A549 (cell line): ENCODE measurements at regions of chrX and their contacts with region 1.

Region 1: GRCh38 chrX:131677655-131678628 is 134.1 kb downstream of the OR13H1 start:
- DNase-seq: peak; percentile 38 to 71
- ATAC-seq: peak; percentile 69 to 88; a peak in 3 of 6 replicates
- H3K4me3 ChIP-seq: no peak overlapping the region
- H3K27ac ChIP-seq: no peak overlapping the region
- H3K4me1 ChIP-seq: no peaks in the 10 kb centered on the region
- CTCF ChIP-seq: peak; percentile 61
- EP300 ChIP-seq: no peak
- POLR2A ChIP-seq: no peak
- RAD21 ChIP-seq: peak; percentile 65 to 71

Region 2: GRCh38 chrX:130975947-130976346 is 702.0 kb before region 1 on chrX:
- CTCF ChIA-PET with region 1: interaction called, 22 read pairs
- POLR2A ChIA-PET with region 1: no interaction called
- DNase-seq: peak; percentile 25 to 57
- ATAC-seq: peak; percentile 83 to 93
- H3K4me3 ChIP-seq: no peak overlapping the region
- H3K27ac ChIP-seq: no peak overlapping the region
- H3K4me1 ChIP-seq: no peaks in the 10 kb centered on the region
- CTCF ChIP-seq: peak; percentile 76
- EP300 ChIP-seq: no peak
- POLR2A ChIP-seq: no peak
- RAD21 ChIP-seq: peak; percentile 75 to 78

Region 3: GRCh38 chrX:130994671-130995070 is 683.3 kb before region 1 on chrX:
- CTCF ChIA-PET with region 1: interaction called, 17 read pairs
- POLR2A ChIA-PET with region 1: no interaction called
- DNase-seq: peak; percentile 16 to 21
- ATAC-seq: peak in 1 of 2 experiments; percentile 53; a peak in 2 of 6 replicates
- H3K4me3 ChIP-seq: no peak overlapping the region
- H3K27ac ChIP-seq: no peak overlapping the region
- H3K4me1 ChIP-seq: no peaks in the 10 kb centered on the region
- CTCF ChIP-seq: peak; percentile 45
- EP300 ChIP-seq: no peak
- POLR2A ChIP-seq: no peak
- RAD21 ChIP-seq: peak; percentile 40 to 44; a peak in 4 of 5 replicates